ENCODE measurements at regions of chr7 and their contacts with region 1.

Region 1: DNA sequence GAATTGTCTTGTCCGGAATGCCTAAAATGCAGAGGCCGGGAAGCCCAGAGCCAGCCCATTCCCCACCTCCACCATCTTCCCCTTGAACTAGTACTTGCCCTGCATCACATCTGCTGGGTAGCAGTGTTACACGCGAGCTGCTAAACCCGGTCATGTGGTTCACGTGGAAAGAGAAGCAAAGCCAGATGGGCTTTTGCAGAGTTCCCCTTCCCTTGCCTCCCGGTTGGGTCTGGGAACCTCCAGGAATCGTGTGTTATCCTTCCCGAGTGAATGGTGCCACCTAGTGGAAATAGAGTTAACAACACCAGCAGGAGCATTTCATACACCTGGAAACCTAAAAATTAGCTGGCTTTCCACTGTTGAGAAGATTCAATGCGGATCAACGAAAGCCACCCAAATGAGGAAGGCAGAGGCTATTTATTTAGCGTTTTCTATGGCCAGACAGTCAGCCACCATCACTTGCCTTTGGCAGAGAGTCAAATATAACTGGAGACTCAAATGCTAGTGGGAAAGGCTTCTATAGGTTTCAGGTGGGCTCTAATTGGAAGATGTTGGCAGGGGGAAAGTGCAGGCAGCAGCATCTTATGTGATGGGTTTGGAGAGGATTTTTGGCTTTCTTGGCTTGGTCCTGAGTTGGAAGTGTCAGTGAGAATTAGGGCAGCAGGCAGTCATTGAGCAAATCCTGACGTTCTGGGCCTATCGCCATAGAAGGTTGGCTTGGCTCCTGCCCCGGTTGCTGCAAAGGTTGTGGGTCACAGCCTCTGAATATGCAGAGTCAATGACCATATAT is 12.9 kb upstream of the DENND2A start:
- DNase-seq: peak; percentile 71 to 80
- H3K4me3 ChIP-seq: no peak overlapping the region
- H3K4me3 Mint-ChIP-seq: no peak overlapping the region
- H3K27ac Mint-ChIP-seq: no peak overlapping the region
- H3K4me1 ChIP-seq: peaks cover 9% of the 10 kb centered on the region
- H3K4me1 Mint-ChIP-seq: peaks cover 12% of the 10 kb centered on the region
- H3K27me3 ChIP-seq: no peaks in the 10 kb centered on the region
- H3K27me3 Mint-ChIP-seq: no peaks in the 10 kb centered on the region
- CTCF ChIP-seq: peak; percentile 80 to 82

Region 2: GRCh38 chr7:140517546-140518369 is 135.8 kb before region 1 on chr7:
- CTCF ChIA-PET with region 1: interaction called, 52 read pairs
- POLR2A ChIA-PET with region 1: no interaction called
- intact Hi-C with region 1: loop called (anchors 1 kb)
- DNase-seq: peak; percentile 90
- H3K4me3 ChIP-seq: no peak overlapping the region
- H3K4me3 Mint-ChIP-seq: no peak overlapping the region
- H3K27ac Mint-ChIP-seq: no peak overlapping the region
- H3K4me1 ChIP-seq: no peaks in the 10 kb centered on the region
- H3K4me1 Mint-ChIP-seq: no peaks in the 10 kb centered on the region
- H3K27me3 ChIP-seq: no peaks in the 10 kb centered on the region
- H3K27me3 Mint-ChIP-seq: no peaks in the 10 kb centered on the region
- CTCF ChIP-seq: peak; percentile 88 to 93